ENCODE measurements at regions of chr11 and their contacts with region 1.

Region 1: GRCh38 chr11:130002846-130003716 is 446 bp upstream of the PRDM10 start:
- DNase-seq: peak; percentile 89 to 97
- H3K4me3 ChIP-seq: peak overlapping the region; percentile 75
- H3K27ac ChIP-seq: peak overlapping the region; percentile 99
- H3K4me1 ChIP-seq: peaks cover 30% of the 10 kb centered on the region
- H3K27me3 ChIP-seq: no peaks in the 10 kb centered on the region
- CTCF ChIP-seq: no peak

Region 2: GRCh38 chr11:129023970-129024676 is 979.0 kb before region 1 on chr11:
- CTCF ChIA-PET with region 1: no interaction called
- POLR2A ChIA-PET with region 1: interaction called, 31 read pairs
- intact Hi-C with region 1: no loop called
- DNase-seq: peak; percentile 82 to 94
- H3K4me3 ChIP-seq: peak overlapping the region; percentile 69
- H3K27ac ChIP-seq: peak overlapping the region; percentile 96
- H3K4me1 ChIP-seq: peaks cover 35% of the 10 kb centered on the region
- H3K27me3 ChIP-seq: no peaks in the 10 kb centered on the region
- CTCF ChIP-seq: no peak

Region 3: GRCh38 chr11:129959687-129960086 is 43.4 kb before region 1 on chr11:
- CTCF ChIA-PET with region 1: no interaction called
- POLR2A ChIA-PET with region 1: no interaction called
- intact Hi-C with region 1: no loop called
- DNase-seq: no peak
- H3K4me3 ChIP-seq: no peak overlapping the region
- H3K27ac ChIP-seq: no peak overlapping the region
- H3K4me1 ChIP-seq: peaks cover 16% of the 10 kb centered on the region
- H3K27me3 ChIP-seq: no peaks in the 10 kb centered on the region
- CTCF ChIP-seq: no peak

Region 4: GRCh38 chr11:129992161-129992944 is 10.7 kb before region 1 on chr11:
- CTCF ChIA-PET with region 1: no interaction called
- POLR2A ChIA-PET with region 1: interaction called, 25 read pairs
- intact Hi-C with region 1: no loop called
- DNase-seq: peak; percentile 5 to 74
- H3K4me3 ChIP-seq: no peak overlapping the region
- H3K27ac ChIP-seq: peak overlapping the region; percentile 45
- H3K4me1 ChIP-seq: peaks cover 16% of the 10 kb centered on the region
- H3K27me3 ChIP-seq: no peaks in the 10 kb centered on the region
- CTCF ChIP-seq: no peak

Region 5: DNA sequence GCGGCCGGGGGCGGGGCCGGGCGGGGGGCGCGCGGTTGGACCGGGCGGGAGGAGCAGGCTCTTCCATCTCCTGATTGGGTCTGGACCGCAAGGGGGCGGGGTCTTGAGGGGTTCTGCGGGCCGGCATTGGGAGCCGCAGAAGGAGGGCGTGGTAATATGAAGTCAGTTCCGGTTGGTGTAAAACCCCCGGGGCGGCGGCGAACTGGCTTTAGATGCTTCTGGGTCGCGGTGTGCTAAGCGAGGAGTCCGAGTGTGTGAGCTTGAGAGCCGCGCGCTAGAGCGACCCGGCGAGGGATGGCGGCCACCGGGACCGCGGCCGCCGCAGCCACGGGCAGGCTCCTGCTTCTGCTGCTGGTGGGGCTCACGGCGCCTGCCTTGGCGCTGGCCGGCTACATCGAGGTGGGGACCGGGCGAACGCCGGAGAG is 66.6 kb after region 1 on chr11 and contains the start of gene APLP2:
- CTCF ChIA-PET with region 1: interaction called, 5 read pairs
- POLR2A ChIA-PET with region 1: interaction called, 5 read pairs
- intact Hi-C with region 1: loop called (anchors 1 kb)
- DNase-seq: peak; percentile 95 to 97
- H3K4me3 ChIP-seq: peak within 1 kb of the TSS; percentile 55
- H3K27ac ChIP-seq: peak within 1 kb of the TSS; percentile 70
- H3K4me1 ChIP-seq: peaks cover 48% of the 10 kb centered on the region
- H3K27me3 ChIP-seq: no peaks in the 10 kb centered on the region
- CTCF ChIP-seq: no peak
- total RNA-seq, gene APLP2: 306 and 350 TPM in 2 replicates

Region 6: DNA sequence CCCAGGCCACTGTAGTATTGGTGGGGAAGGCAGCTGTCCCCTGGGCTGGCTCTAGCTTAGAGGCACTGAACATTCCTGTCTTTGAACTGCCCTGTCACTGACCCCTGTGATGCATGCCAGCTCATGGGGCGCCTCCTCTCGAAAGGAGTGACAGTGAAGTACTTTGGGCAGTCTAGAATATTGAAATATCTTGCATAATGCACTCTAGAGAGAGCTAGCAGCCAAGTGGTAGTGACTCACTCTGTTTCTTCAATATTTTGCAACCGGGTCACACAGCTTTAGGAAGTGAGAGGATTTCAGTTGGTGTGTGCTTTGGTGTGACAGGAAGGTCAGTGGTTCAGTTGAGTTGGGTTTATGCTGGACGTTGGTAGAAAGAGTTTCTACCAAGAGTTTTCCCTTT is 121.0 kb after region 1 on chr11:
- CTCF ChIA-PET with region 1: no interaction called
- POLR2A ChIA-PET with region 1: no interaction called
- intact Hi-C with region 1: loop called (anchors 1 kb)
- DNase-seq: peak; percentile 84 to 99
- H3K4me3 ChIP-seq: peak overlapping the region; percentile 41; the same call in 1 of the 2 replicates
- H3K27ac ChIP-seq: peak overlapping the region; percentile 93
- H3K4me1 ChIP-seq: peaks cover 47% of the 10 kb centered on the region
- H3K27me3 ChIP-seq: no peaks in the 10 kb centered on the region
- CTCF ChIP-seq: no peak; the same call in 1 of the 2 replicates